SK-N-SH (cell line): ENCODE measurements at regions of chr20 and their contacts with region 1.

Region 1: DNA sequence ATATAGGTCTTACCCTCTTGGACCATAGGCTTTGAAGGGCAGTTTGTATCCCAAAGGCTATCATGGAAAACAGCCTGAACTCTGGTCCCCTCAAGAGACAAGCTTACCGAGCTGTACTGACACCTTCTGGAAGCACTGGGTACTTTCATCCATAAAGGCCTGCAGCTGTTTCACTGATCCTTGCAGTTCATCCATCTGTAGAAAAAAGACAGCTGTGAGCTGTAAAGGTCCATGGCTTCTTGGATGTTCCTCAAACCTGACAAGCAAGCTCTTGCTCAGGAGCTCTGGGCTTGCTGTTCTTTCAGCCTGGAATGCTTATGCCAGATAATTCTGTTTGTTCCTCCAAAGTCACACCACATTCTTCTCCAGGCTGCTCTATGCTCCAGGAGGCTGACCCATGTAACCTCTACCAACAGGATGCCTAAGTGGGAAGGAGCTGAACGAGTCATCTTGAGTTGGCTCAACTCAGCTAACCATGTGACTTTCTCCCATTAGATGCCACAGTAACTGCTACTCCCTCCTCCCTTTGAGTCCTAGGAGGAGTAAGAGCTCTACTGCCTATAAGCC is 8.8 kb upstream of the NDRG3 start:
- DNase-seq: peak; percentile 71
- H3K4me3 ChIP-seq: no peak overlapping the region
- H3K27ac ChIP-seq: peak overlapping the region in 1 of 2 experiments; percentile 14; a peak in 1 of 4 replicates
- H3K4me1 ChIP-seq: no peaks in the 10 kb centered on the region
- H3K27me3 ChIP-seq: no peaks in the 10 kb centered on the region
- CTCF ChIP-seq: peak; percentile 76
- EP300 ChIP-seq: no peak
- RAD21 ChIP-seq: peak; percentile 87

Region 2: GRCh38 chr20:36461600-36462439 is 292.9 kb before region 1 on chr20:
- CTCF ChIA-PET with region 1: no interaction called
- POLR2A ChIA-PET with region 1: no interaction called
- DNase-seq: peak; percentile 78
- H3K4me3 ChIP-seq: peak overlapping the region; percentile 76 to 91
- H3K27ac ChIP-seq: peak overlapping the region; percentile 80 to 90
- H3K4me1 ChIP-seq: peaks cover 35 to 39% of the 10 kb centered on the region in 2 experiments
- H3K27me3 ChIP-seq: no peaks in the 10 kb centered on the region
- CTCF ChIP-seq: no peak
- EP300 ChIP-seq: no peak
- RAD21 ChIP-seq: no peak

Region 3: GRCh38 chr20:36613974-36614373 is 140.8 kb before region 1 on chr20:
- CTCF ChIA-PET with region 1: interaction called, 40 read pairs
- POLR2A ChIA-PET with region 1: no interaction called
- DNase-seq: no peak
- H3K4me3 ChIP-seq: no peak overlapping the region
- H3K27ac ChIP-seq: no peak overlapping the region
- H3K4me1 ChIP-seq: no peaks in the 10 kb centered on the region
- H3K27me3 ChIP-seq: no peaks in the 10 kb centered on the region
- CTCF ChIP-seq: no peak
- EP300 ChIP-seq: no peak
- RAD21 ChIP-seq: no peak

Region 4: DNA sequence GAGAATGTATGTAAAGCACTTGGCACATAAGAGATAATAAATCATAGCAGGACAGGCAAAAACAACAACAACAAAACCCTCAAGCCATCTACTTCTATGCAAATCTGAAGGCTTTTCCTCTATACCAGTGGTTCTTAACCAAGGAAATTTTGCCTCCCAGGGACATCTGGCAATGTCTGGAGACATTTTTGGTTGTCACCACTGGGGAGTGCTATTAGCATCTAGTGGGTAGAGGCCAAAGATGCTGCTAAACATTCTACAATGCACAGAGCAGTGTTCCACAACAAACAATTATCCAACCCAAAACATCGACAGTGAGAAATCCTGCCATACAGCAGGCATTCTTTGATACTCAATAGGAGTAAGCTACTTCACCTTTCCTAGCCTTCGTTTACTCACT is 37.1 kb before region 1 on chr20:
- CTCF ChIA-PET with region 1: interaction called, 16 read pairs
- POLR2A ChIA-PET with region 1: interaction called, 5 read pairs
- DNase-seq: no peak
- H3K4me3 ChIP-seq: no peak overlapping the region
- H3K27ac ChIP-seq: no peak overlapping the region
- H3K4me1 ChIP-seq: no peaks in the 10 kb centered on the region
- H3K27me3 ChIP-seq: no peaks in the 10 kb centered on the region
- CTCF ChIP-seq: peak; percentile 27; the same call in 1 of the 2 replicates
- EP300 ChIP-seq: no peak
- RAD21 ChIP-seq: peak; percentile 57

Region 5: DNA sequence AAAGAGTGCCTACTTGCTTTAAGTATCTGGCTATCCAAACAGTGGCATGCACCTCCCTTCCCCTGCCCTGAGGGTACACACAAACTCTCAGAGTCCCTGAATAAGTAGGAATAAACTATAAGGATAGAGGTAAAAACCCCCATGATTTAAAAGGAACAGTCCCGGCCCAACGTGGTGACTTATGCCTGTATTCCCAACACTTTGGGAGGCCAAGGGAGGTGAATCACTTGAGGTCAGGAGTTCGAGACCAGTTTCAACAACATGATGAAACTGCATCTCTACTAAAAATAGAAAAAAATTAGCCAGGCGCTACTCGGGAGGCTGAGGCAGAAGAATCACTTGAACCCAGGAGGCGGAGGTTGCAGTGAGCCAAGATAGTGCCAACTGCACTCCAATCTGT is 174.6 kb after region 1 on chr20:
- CTCF ChIA-PET with region 1: no interaction called
- POLR2A ChIA-PET with region 1: no interaction called
- DNase-seq: no peak
- H3K4me3 ChIP-seq: no peak overlapping the region
- H3K27ac ChIP-seq: no peak overlapping the region
- H3K4me1 ChIP-seq: no peaks in the 10 kb centered on the region
- H3K27me3 ChIP-seq: no peaks in the 10 kb centered on the region
- CTCF ChIP-seq: no peak
- EP300 ChIP-seq: no peak
- RAD21 ChIP-seq: no peak